Common myeloid progenitor, CD34-positive (primary cell): ENCODE measurements at regions of chr2 and their contacts with region 1.

Region 1: DNA sequence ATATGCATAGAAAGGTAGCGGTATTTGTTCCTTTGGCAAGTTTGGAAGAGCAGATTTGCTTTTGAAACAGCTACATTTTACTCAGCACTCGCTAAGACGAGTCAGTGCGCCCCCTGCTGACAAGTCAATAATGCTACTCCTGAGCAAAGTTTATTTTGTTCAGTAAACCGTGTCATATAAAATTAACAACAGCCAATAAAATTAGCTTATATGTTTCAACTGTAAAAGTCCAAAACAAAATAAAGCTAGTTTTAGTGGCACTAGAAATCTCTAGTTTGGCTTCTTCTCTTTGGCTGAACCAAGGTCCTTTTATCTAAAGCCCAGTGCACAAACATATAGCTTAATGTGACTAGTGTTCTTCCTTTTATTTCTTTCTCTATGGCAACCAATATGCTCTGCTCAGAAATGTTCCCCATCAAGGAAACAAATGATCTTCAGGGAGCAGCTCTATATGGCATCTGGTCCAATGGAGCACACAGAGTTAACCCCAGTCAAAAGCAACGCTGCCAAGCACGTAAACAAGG is 4.2 kb upstream of the POU3F3 start:
- DNase-seq: peak; percentile 81 to 90 (median 90)
- H3K4me3 ChIP-seq: no peak overlapping the region
- H3K27ac ChIP-seq: no peak overlapping the region
- H3K4me1 ChIP-seq: peaks cover 0 to 30% (median 23%) of the 10 kb centered on the region in 4 experiments
- H3K27me3 ChIP-seq: peaks cover 52 to 96% (median 69%) of the 10 kb centered on the region in 5 experiments

Region 2: GRCh38 chr2:104444392-104444791 is 405.3 kb before region 1 on chr2:
- CTCF ChIA-PET with region 1: interaction called, 46 read pairs
- POLR2A ChIA-PET with region 1: no interaction called
- DNase-seq: peak in 1 of 3 donors; percentile 10
- H3K4me3 ChIP-seq: no peak overlapping the region
- H3K27ac ChIP-seq: no peak overlapping the region
- H3K4me1 ChIP-seq: peaks cover 0 to 13% (median 1%) of the 10 kb centered on the region in 4 experiments
- H3K27me3 ChIP-seq: no peaks in the 10 kb centered on the region

Region 3: DNA sequence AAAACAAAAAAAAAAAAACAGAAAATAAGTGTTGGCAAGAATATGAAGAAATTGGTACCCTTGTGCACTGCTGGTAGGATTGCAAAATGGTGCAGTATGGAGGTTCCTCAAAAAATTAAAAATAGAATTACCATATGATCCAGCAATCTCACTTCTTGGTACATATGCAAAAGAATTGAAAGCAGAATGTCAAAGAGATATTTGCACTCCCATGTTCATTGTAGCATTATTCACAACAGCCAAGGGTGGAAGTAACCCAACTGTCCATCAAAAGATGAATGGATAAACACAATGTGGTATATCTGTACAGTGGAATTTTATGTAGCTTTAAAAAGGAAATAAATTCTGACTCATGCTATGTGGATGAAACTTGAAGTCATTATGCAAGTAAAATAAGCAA is 68.5 kb before region 1 on chr2:
- CTCF ChIA-PET with region 1: no interaction called
- POLR2A ChIA-PET with region 1: no interaction called
- DNase-seq: no peak
- H3K4me3 ChIP-seq: no peak overlapping the region
- H3K27ac ChIP-seq: no peak overlapping the region
- H3K4me1 ChIP-seq: peaks cover 0 to 2% (median 0%) of the 10 kb centered on the region in 4 experiments
- H3K27me3 ChIP-seq: no peaks in the 10 kb centered on the region

Region 4: DNA sequence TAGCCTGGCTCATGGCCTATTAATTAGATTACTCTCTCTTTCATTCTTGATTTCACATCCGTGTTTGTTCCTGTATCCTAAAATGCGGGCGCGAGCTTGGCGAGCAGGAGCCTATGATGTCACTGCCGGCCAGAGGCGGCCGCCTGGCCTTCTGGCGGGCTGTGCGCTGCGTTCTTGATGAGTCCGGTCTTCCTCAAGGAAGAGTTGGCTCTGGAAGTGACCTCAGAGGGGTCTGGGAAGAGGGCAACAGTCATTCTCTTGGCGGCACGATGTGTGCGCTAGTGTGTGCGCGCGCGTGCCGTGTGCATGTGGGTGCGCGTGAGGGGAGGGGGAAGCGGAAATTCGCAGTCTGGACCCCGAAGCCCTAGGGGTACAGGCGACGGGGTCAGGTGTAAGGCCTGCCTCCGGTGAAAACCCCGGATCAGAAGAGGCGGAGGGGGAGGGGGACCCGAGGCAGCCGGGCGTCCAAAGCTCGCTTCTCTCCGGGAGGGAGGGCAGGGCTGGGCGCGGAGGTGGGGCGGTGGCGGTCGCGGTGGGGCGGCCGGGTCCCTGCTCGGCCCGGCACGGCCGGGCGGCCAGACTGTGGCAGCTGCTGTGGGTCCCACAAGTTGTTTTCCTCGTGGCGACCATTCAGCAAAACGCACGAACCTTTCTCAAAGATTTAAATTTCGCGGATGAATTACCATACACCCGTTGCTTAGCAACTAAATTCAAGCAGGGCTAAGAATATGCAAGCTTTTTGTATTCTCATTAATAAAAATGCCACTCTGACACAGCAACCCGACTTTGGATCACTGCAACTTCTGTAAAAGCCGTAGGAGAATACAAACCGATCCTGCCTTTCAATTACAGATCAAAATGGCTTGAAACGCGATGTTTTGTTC is 12.6 kb after region 1 on chr2:
- CTCF ChIA-PET with region 1: interaction called, 34 read pairs
- POLR2A ChIA-PET with region 1: no interaction called
- DNase-seq: peak in 2 of 3 donors; percentile 62 to 65
- H3K4me3 ChIP-seq: peak overlapping the region in 2 of 7 experiments; percentile 33 to 54
- H3K27ac ChIP-seq: no peak overlapping the region
- H3K4me1 ChIP-seq: peaks cover 0 to 20% (median 10%) of the 10 kb centered on the region in 4 experiments
- H3K27me3 ChIP-seq: peaks cover 55 to 98% (median 73%) of the 10 kb centered on the region in 5 experiments

Region 5: GRCh38 chr2:104872866-104873688 is 23.4 kb after region 1 on chr2:
- CTCF ChIA-PET with region 1: interaction called, 34 read pairs
- POLR2A ChIA-PET with region 1: no interaction called
- DNase-seq: peak; percentile 76 to 82 (median 82)
- H3K4me3 ChIP-seq: peak overlapping the region; percentile 51 to 79 (median 68)
- H3K27ac ChIP-seq: no peak overlapping the region
- H3K4me1 ChIP-seq: peaks cover 4 to 29% (median 21%) of the 10 kb centered on the region in 4 experiments
- H3K27me3 ChIP-seq: peaks cover 9 to 53% (median 37%) of the 10 kb centered on the region in 5 experiments